ENCODE measurements at regions of chr7 and their contacts with region 1.

Region 1: DNA sequence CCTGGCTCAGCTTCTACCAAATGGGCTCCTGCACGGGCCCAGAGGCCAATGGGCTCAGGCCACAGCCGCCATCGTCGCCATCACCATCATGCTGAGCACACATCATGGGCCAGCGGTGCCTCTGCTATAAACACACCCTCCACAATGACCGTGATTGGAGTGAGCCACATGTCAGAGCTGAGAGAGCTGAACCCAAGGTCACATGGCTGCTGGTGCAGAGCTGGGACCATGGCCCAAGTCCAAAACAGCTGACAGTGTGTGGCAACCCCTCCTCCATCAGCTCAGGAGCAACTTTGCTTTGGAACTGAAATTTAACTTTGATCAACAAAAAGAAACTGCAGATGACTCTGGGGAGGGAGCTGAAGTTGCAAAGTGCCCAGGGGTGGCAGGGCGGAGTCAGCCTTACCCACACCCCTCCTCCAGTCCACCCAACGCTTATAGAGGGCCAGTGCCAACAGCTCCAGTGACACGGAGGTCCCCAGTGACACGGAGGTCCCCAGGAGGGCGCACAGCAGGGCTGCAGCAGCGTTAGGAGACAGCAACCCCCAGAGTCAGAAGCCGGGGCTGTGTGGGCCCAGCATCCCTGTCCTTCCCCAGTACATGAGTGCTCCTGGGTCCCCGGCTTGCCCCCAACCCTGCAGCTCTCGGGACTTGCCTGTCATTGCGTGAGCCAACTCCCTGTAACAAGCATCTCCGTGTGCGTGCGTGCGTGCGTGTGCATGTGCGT is 249.6 kb downstream of the ELFN1 start:
- DNase-seq: peak in 1 of 9 experiments; percentile 34
- ATAC-seq: peak; percentile 22
- H3K4me3 ChIP-seq: peak overlapping the region; percentile 38 to 45
- H3K4me3 Mint-ChIP-seq: peak overlapping the region; percentile 89
- H3K27ac ChIP-seq: peak overlapping the region in 1 of 2 experiments; percentile 30
- H3K27ac Mint-ChIP-seq: peak overlapping the region; percentile 87
- H3K4me1 ChIP-seq: peaks cover 78% of the 10 kb centered on the region
- H3K4me1 Mint-ChIP-seq: peaks cover 70% of the 10 kb centered on the region
- H3K27me3 ChIP-seq: no peaks in the 10 kb centered on the region
- H3K27me3 Mint-ChIP-seq: no peaks in the 10 kb centered on the region
- CTCF ChIP-seq: no peak

Region 2: GRCh38 chr7:1842321-1843221 is 77.1 kb before region 1 on chr7:
- CTCF ChIA-PET with region 1: no interaction called
- POLR2A ChIA-PET with region 1: no interaction called
- intact Hi-C with region 1: no loop called
- DNase-seq: peak in 1 of 9 experiments; percentile 10
- ATAC-seq: no peak
- H3K4me3 ChIP-seq: no peak overlapping the region
- H3K4me3 Mint-ChIP-seq: no peak overlapping the region
- H3K27ac ChIP-seq: no peak overlapping the region
- H3K27ac Mint-ChIP-seq: no peak overlapping the region
- H3K4me1 ChIP-seq: no peaks in the 10 kb centered on the region
- H3K4me1 Mint-ChIP-seq: peaks cover 5% of the 10 kb centered on the region
- H3K27me3 ChIP-seq: no peaks in the 10 kb centered on the region
- H3K27me3 Mint-ChIP-seq: no peaks in the 10 kb centered on the region
- CTCF ChIP-seq: no peak

Region 3: DNA sequence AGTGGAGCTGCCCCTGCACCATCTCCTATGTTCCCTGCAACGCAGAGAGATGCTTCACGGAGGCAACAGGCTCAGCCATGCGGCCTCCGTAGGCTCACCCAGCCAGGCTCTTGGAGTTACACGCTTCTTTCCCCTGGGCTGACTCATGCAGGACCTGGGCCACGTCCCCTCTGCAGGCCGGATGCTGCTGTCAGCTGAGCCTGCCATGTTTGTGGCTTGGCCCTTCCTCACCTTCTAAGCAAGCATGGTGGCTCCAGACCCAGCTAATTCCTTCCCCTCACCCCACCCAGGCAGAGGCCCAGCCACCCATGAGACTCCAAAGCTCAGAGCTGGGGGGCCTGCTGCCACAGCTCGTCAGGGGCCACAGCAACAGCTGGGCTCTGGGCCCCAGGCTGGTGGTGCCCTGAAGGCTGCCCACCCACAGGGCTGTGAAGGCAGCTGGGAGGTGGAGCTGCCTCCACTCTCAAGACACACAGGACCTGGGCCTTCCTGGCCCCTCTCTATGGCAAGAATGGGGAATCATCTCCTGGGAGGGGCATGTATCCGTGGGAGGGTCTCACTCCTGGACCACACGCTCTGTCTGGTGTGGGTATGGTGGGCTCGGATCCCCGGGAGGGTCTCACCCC is 30.0 kb before region 1 on chr7:
- CTCF ChIA-PET with region 1: interaction called, 3 read pairs
- POLR2A ChIA-PET with region 1: no interaction called
- intact Hi-C with region 1: loop called in 1 of 2 experiments (anchors 5 kb)
- DNase-seq: peak in 2 of 9 experiments; percentile 13 to 26
- ATAC-seq: peak; percentile 49
- H3K4me3 ChIP-seq: no peak overlapping the region
- H3K4me3 Mint-ChIP-seq: no peak overlapping the region
- H3K27ac ChIP-seq: peak overlapping the region in 1 of 2 experiments; percentile 46
- H3K27ac Mint-ChIP-seq: peak overlapping the region; percentile 82
- H3K4me1 ChIP-seq: peaks cover 14% of the 10 kb centered on the region
- H3K4me1 Mint-ChIP-seq: peaks cover 35% of the 10 kb centered on the region
- H3K27me3 ChIP-seq: no peaks in the 10 kb centered on the region
- H3K27me3 Mint-ChIP-seq: no peaks in the 10 kb centered on the region
- CTCF ChIP-seq: no peak

Region 4: GRCh38 chr7:1979591-1980560 is 60.2 kb after region 1 on chr7:
- CTCF ChIA-PET with region 1: no interaction called
- POLR2A ChIA-PET with region 1: no interaction called
- intact Hi-C with region 1: loop called in 1 of 2 experiments (anchors 10 kb)
- DNase-seq: no peak
- ATAC-seq: no peak
- H3K4me3 ChIP-seq: no peak overlapping the region
- H3K4me3 Mint-ChIP-seq: no peak overlapping the region
- H3K27ac ChIP-seq: no peak overlapping the region
- H3K27ac Mint-ChIP-seq: no peak overlapping the region
- H3K4me1 ChIP-seq: peaks cover 6% of the 10 kb centered on the region
- H3K4me1 Mint-ChIP-seq: peaks cover 18% of the 10 kb centered on the region
- H3K27me3 ChIP-seq: no peaks in the 10 kb centered on the region
- H3K27me3 Mint-ChIP-seq: no peaks in the 10 kb centered on the region
- CTCF ChIP-seq: no peak

Region 5: DNA sequence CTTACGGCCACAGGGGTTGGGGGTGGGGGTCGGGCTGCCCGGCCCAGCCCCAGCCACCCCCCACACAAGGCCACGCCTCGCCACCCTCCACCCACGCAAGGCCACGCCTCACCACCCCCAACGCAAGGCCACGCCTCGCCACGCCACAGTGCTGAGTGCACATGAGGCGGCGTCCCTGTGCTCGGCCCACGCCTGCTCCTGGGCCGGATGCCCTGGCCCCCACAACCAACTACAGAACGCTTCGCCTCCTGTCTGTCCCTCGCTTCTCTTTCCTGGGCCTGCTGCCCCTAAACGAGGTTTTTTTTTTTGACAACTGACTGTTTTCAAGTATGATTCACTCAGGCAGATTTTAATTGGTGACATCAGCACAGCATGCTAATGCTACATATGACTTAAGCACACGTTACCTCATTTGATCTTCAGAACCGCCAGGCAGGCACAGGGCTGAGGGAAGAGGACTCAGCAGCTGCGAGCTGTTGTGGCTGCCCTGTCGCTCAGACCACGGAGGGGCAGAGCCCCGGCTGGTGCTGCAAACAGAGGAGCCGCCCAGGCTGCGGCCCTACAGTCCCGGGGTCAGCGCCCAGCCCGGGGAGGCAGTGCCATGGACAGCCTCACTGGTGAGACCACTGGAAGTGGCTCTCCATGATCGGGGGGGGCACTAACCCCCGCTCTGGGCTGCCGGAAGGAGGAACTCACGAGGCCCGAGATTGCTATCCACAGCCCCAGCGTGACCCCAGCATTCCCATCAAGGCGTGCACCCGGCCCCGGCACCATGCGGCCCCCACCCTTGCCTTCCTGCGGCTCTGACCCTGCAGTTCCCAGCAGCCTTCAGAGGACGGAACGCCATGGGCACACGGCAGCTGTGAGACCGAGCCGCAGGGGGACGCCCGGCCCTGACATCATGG is 100.2 kb after region 1 on chr7:
- CTCF ChIA-PET with region 1: no interaction called
- POLR2A ChIA-PET with region 1: no interaction called
- intact Hi-C with region 1: loop called in 1 of 2 experiments (anchors 2 kb)
- DNase-seq: peak in 6 of 9 experiments; percentile 25 to 81 (median 64)
- ATAC-seq: peak; percentile 92
- H3K4me3 ChIP-seq: peak overlapping the region; percentile 19 to 26
- H3K4me3 Mint-ChIP-seq: peak overlapping the region; percentile 69
- H3K27ac ChIP-seq: peak overlapping the region in 1 of 2 experiments; percentile 18
- H3K27ac Mint-ChIP-seq: peak overlapping the region; percentile 81
- H3K4me1 ChIP-seq: peaks cover 19% of the 10 kb centered on the region
- H3K4me1 Mint-ChIP-seq: peaks cover 23% of the 10 kb centered on the region
- H3K27me3 ChIP-seq: no peaks in the 10 kb centered on the region
- H3K27me3 Mint-ChIP-seq: no peaks in the 10 kb centered on the region
- CTCF ChIP-seq: no peak

Region 6: DNA sequence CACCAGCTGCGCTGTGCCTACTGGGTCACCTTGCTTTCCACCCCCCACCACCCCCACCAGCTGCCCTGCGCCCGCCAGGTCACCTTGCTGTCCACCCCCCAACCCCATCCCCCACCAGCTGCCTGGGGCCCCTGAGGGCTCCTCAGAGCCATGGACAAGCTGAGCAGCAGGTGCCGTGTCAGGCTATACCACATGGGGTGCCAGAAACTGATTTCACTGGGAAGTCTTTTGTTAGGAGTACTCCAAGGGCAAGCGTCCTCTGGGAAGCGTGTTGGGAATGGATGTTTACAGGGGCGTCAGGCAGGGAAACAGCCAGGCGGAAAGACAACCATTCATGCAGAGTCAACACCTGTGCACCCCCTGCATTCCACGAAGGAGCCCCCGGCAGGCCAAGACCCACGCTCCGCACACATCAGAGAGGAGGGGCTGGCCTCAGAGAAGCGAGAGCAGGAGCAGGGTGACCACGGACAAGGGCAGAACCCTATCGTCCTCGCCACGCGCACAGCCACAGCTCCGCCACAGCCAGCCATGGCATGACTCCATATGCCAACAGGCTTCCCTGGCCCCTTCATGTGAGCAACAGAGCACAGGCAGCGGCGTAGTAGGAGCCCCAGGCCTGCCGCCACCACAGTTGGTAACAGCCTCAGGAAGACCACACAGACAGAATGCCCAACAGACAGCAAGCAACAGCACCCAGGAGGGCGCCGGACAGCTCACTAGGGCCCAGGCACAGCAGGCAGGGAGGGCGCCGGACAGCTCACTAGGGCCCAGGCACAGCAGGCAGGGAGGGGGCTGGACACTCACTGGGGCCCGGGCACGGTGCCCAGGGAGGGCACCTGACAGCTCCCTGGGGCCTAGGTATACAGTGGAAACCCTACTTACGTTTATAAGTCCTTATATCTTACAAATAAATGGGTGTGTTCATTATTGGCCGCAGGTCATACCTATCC is 132.3 kb after region 1 on chr7:
- CTCF ChIA-PET with region 1: no interaction called
- POLR2A ChIA-PET with region 1: no interaction called
- intact Hi-C with region 1: no loop called
- DNase-seq: no peak
- ATAC-seq: no peak
- H3K4me3 ChIP-seq: no peak overlapping the region
- H3K4me3 Mint-ChIP-seq: no peak overlapping the region
- H3K27ac ChIP-seq: no peak overlapping the region
- H3K27ac Mint-ChIP-seq: no peak overlapping the region
- H3K4me1 ChIP-seq: peaks cover 22% of the 10 kb centered on the region
- H3K4me1 Mint-ChIP-seq: peaks cover 22% of the 10 kb centered on the region
- H3K27me3 ChIP-seq: no peaks in the 10 kb centered on the region
- H3K27me3 Mint-ChIP-seq: no peaks in the 10 kb centered on the region
- CTCF ChIP-seq: no peak

Region 7: GRCh38 chr7:2354186-2354938 is 434.7 kb after region 1 on chr7 and contains the start of gene EIF3B:
- CTCF ChIA-PET with region 1: no interaction called
- POLR2A ChIA-PET with region 1: no interaction called
- intact Hi-C with region 1: loop called in 1 of 2 experiments (anchors 10 kb)
- DNase-seq: peak; percentile 80 to 97 (median 90)
- ATAC-seq: peak; percentile 84
- H3K4me3 ChIP-seq: peak within 1 kb of the TSS; percentile 72 to 74
- H3K4me3 Mint-ChIP-seq: peak within 1 kb of the TSS; percentile 88
- H3K27ac ChIP-seq: peak within 1 kb of the TSS; percentile 99
- H3K27ac Mint-ChIP-seq: peak within 1 kb of the TSS; percentile 99
- H3K4me1 ChIP-seq: peaks cover 45% of the 10 kb centered on the region
- H3K4me1 Mint-ChIP-seq: peaks cover 40% of the 10 kb centered on the region
- H3K27me3 ChIP-seq: no peaks in the 10 kb centered on the region
- H3K27me3 Mint-ChIP-seq: no peaks in the 10 kb centered on the region
- CTCF ChIP-seq: no peak
- total RNA-seq, gene EIF3B: 234 to 239 TPM

Measured in CD8-positive, alpha-beta T cell (primary cell).